ENCODE measurements at regions of chr19 and their contacts with region 1.

Region 1: DNA sequence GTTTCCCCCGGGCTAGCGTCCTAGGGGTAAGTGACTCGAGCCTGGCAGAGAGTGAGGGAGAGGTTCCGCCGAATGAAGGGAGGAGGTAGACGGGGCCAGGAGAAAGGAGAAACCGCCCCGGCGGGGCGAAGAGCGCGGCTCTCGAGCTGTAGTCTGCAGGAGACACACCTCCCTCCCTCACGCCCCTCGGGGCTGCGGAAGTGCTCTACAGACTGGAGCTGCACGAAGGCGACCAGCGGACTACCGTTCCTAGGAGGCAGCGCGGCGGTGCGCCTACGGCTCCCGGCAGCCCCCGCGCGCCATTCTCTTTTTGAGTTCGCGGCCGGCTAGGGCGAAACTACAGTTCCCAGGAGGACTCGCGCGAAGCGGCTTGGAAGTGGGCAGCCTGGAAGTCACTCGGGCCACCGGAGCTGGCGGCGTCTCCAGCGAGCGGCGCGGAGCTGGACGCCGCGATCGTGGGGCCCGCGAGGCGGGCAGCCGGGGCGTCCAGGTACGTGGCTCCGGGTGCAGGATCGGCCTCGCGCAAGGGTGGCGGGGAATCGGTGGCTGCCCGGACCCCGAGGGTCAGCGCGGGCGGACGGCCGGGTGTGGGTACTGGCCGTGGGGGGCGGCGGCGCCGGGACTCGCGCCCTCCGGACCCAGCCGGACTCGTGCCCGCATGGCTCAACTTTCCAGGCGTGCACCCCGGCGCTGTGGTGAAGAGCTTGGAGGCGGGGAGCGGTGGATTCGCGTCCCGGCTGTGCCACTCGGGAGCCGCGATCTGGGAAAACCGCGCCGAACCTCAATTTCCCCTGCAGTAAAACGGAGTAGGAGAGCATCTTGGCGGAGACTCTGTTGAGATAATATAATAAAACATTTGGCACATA is at the start of gene SIPA1L3:
- DNase-seq: peak; percentile 89
- ATAC-seq: peak; percentile 92
- H3K4me3 Mint-ChIP-seq: peak within 1 kb of the TSS; percentile 86
- H3K27ac Mint-ChIP-seq: peak within 1 kb of the TSS; percentile 94
- H3K4me1 Mint-ChIP-seq: peaks cover 61% of the 10 kb centered on the region
- H3K27me3 Mint-ChIP-seq: no peaks in the 10 kb centered on the region
- CTCF ChIP-seq: no peak
- total RNA-seq, gene SIPA1L3: 120 and 145 TPM in 2 replicates

Region 2: GRCh38 chr19:37855098-37855497 is 52.0 kb before region 1 on chr19:
- CTCF ChIA-PET with region 1: no interaction called
- POLR2A ChIA-PET with region 1: no interaction called
- intact Hi-C with region 1: no loop called
- DNase-seq: peak; percentile 18
- ATAC-seq: peak; percentile 54
- H3K4me3 Mint-ChIP-seq: no peak overlapping the region
- H3K27ac Mint-ChIP-seq: no peak overlapping the region
- H3K4me1 Mint-ChIP-seq: no peaks in the 10 kb centered on the region
- H3K27me3 Mint-ChIP-seq: peaks cover 7% of the 10 kb centered on the region
- CTCF ChIP-seq: no peak

Region 3: DNA sequence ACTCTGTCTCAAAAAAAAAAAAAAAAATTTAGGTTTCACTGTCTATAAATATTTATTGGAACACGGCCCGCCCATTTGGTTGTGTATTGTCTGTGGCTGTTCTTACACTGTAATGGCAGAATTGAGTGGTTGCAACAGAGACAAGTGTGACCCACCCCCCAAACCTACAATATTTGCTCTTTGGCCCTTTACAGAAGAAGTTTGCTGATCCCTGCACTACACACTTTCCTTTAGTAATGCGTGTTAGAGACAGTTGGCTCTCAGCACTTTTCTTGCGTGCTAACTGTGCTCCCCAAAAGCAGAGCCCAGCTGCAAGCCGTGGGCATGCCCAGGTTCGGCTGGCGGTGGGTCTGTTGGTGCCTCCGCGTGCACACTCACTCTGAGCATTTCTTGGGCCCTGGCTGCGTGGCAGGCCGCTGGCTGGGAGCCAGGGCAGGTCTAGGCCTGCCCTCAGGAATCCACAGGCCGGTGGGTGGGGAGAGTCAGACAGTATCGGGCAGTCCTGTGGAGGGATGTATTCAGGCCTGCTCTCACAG is 72.5 kb after region 1 on chr19:
- CTCF ChIA-PET with region 1: interaction called, 6 read pairs
- POLR2A ChIA-PET with region 1: interaction called, 74 read pairs
- intact Hi-C with region 1: loop called (anchors 1 kb)
- DNase-seq: no peak
- ATAC-seq: peak; percentile 3
- H3K4me3 Mint-ChIP-seq: peak overlapping the region; percentile 60
- H3K27ac Mint-ChIP-seq: peak overlapping the region; percentile 90
- H3K4me1 Mint-ChIP-seq: peaks cover 95% of the 10 kb centered on the region
- H3K27me3 Mint-ChIP-seq: no peaks in the 10 kb centered on the region
- CTCF ChIP-seq: no peak

Region 4: DNA sequence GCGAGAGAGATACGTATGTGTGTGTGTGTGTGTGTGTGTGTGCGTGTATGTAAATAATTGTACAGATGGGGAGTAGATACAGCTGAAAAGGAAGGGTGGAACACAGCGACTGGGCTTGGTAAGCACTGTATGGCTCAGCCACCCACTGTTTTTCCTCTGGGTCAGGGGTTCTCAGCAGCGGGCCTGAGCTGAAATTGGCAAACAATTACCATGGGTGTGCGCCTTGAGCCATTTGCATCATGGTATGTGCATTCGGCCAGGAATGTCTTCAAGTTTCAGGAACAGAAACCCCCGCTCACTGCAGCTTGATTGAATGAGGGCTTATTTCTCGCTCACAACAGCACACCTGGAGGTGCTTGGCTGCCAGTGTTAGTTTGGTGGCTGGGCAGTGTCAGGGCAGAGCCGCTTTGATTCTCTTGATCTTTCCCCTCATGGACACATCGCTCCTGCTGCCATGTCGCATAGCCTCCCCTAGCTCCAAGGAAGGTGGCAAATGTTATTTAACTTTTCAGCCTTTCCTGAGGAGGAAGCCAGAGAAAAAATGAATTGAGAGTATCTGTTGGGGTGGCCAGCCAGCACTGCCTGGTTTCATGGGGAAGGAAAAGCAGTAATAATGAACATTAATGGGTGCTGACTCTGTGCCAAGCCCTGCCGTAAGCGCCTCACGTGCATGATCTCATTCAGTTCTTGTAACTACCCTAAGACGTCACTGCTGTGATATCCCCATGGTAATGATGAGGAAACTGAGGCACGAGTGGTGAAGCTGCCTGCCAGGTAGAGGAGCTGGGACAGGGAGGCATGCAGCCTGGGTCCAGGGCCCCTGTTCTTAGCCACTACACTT is 126.8 kb after region 1 on chr19:
- CTCF ChIA-PET with region 1: interaction called, 43 read pairs
- POLR2A ChIA-PET with region 1: interaction called, 57 read pairs
- intact Hi-C with region 1: loop called (anchors 1 kb)
- DNase-seq: peak; percentile 60
- ATAC-seq: peak; percentile 76
- H3K4me3 Mint-ChIP-seq: peak overlapping the region; percentile 79
- H3K27ac Mint-ChIP-seq: peak overlapping the region; percentile 98
- H3K4me1 Mint-ChIP-seq: peaks cover 85% of the 10 kb centered on the region
- H3K27me3 Mint-ChIP-seq: no peaks in the 10 kb centered on the region
- CTCF ChIP-seq: no peak

Region 5: DNA sequence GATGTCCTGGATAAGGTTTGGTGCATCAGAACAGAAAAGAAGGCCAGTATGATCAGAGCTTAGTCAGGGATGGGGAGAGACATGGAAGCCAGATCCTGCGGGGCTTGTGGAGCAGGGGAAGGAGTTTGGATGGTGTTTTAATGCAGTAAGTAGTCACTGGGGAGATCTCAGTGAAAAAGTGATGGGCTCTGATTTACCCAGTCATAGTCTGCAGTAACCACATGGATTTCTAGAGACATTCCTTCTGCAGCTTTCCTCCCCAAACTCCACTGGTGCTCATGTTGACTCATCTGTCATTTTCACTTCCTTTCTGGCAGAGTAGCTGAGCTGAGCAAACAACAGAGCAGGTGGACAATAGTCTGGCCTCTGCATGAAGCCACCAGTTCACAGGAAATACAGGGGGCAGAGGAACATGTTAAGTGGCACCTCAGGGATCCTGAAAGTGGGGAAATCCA is 172.9 kb after region 1 on chr19:
- CTCF ChIA-PET with region 1: interaction called, 3 read pairs
- POLR2A ChIA-PET with region 1: interaction called, 16 read pairs
- intact Hi-C with region 1: no loop called
- DNase-seq: no peak
- ATAC-seq: peak; percentile 83
- H3K4me3 Mint-ChIP-seq: peak overlapping the region; percentile 28
- H3K27ac Mint-ChIP-seq: peak overlapping the region; percentile 87
- H3K4me1 Mint-ChIP-seq: peaks cover 22% of the 10 kb centered on the region
- H3K27me3 Mint-ChIP-seq: no peaks in the 10 kb centered on the region
- CTCF ChIP-seq: no peak

Region 6: DNA sequence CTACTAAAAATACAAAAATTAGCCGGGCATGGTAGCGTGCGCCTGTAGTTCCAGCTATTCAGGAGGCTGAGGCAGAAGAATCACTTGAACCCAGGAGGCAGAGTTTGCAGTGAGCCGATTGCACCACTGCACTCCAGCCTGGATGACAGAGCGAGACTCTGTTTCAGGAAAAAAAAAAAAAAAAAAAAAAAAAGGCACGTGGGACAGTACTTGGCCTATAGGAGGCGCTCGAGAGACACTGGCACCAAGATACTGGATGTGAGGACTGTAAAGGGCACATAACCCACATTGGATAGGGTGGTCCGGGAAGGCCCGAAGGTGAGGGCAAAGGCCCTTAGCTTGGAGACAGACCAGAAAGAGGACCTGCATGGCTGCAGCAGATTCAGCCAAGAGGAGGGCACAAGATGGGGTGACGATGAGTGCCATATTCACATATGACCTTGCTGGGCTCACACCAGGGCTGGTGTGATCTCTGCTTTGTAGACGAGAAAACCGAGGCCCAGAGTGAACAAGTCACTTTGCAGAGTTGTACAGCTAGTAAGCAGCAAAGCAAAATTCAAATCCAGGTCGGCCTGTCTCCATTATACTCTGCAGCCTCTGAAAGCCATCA is 227.5 kb after region 1 on chr19:
- CTCF ChIA-PET with region 1: interaction called, 5 read pairs
- POLR2A ChIA-PET with region 1: no interaction called
- intact Hi-C with region 1: loop called (anchors 2 kb)
- DNase-seq: no peak
- ATAC-seq: peak; percentile 56
- H3K4me3 Mint-ChIP-seq: no peak overlapping the region
- H3K27ac Mint-ChIP-seq: no peak overlapping the region
- H3K4me1 Mint-ChIP-seq: no peaks in the 10 kb centered on the region
- H3K27me3 Mint-ChIP-seq: no peaks in the 10 kb centered on the region
- CTCF ChIP-seq: no peak

Region 7: GRCh38 chr19:38315657-38316476 is 408.8 kb after region 1 on chr19 and contains the start of gene YIF1B:
- CTCF ChIA-PET with region 1: no interaction called
- POLR2A ChIA-PET with region 1: no interaction called
- intact Hi-C with region 1: loop called (anchors 5 kb)
- DNase-seq: peak; percentile 89
- ATAC-seq: peak; percentile 92
- H3K4me3 Mint-ChIP-seq: peak within 1 kb of the TSS; percentile 85
- H3K27ac Mint-ChIP-seq: peak within 1 kb of the TSS; percentile 94
- H3K4me1 Mint-ChIP-seq: peaks cover 49% of the 10 kb centered on the region
- H3K27me3 Mint-ChIP-seq: no peaks in the 10 kb centered on the region
- CTCF ChIP-seq: no peak
- total RNA-seq, gene YIF1B: 28.7 and 30.1 TPM in 2 replicates

Measured in activated B cell treated with CpG ODN at 0.5 μM for 24 hours (primary cell).